ENCODE measurements at regions of chr6 and their contacts with region 1.

Region 1: DNA sequence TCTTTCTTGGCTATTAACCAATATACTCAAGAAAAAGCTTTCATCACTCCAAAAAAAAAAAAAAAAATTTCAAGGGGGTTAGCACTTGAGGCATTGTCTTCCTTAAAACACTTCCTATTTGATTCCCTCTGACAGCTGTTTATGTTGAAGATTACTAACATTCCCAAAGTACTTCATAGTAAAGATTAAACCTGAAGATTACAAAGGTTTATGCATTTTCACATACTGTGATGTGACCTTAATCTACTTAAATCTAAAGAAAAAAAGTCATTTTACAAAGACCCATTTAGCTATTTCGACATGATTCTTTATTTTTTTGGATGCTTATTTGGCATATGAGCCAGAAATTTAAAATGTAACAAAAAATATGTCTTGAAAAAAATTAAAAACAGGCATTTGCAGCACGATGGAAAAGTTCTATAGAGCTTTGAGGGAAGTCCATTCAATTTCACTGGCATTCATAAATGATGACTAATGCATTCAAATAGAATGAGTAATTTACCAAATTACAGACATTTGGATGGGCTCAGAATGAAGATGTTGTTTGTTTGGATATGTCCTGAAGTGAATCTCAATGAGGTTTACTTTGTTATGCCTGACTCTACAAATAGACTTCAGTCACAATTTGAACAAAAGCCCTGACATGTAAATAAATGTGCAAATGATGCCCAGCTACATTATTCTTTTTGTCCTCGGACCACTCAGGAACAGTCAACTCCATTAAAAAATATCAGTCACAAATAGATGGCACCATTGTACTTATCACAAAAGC is 674.6 kb upstream of the MARCKS start:
- DNase-seq: peak; percentile 72
- H3K4me3 ChIP-seq: no peak overlapping the region
- H3K27ac ChIP-seq: no peak overlapping the region
- H3K4me1 ChIP-seq: peaks cover 8% of the 10 kb centered on the region
- H3K27me3 ChIP-seq: no peaks in the 10 kb centered on the region
- CTCF ChIP-seq: 0 out of 2 replicates have a peak, but pooled peaks have one; percentile 14

Region 2: DNA sequence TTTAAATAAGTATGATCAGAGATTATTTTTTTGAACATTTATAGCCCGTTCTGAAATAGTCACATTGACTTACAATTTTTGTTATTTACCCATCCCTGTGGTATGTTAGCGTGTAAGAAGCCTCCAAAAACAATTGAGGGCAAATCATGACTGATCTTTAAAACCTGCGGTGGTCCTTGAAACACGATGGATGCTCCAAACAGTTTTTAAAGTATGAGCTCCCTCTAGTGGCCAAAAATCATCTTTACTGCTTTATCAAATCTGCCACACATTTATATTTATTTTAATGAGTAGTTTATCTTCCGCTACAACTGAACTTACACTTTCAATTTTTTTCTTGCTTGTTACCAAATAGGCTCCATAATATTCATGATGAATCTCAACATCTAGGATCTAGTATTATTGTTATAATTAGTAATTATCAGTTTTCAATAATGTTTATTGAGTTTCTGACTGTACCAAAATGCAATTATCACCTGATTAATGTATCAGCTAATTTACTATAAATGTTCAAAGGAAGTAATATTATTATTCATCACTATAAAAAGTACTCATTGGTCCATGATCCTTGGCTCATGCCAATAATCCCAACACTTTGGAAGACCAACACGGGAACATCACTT is 726.8 kb after region 1 on chr6:
- CTCF ChIA-PET with region 1: no interaction called
- POLR2A ChIA-PET with region 1: no interaction called
- intact Hi-C with region 1: loop called (anchors 10 kb)
- DNase-seq: peak; percentile 79
- H3K4me3 ChIP-seq: no peak overlapping the region
- H3K27ac ChIP-seq: no peak overlapping the region
- H3K4me1 ChIP-seq: no peaks in the 10 kb centered on the region
- H3K27me3 ChIP-seq: no peaks in the 10 kb centered on the region
- CTCF ChIP-seq: peak; percentile 73

Measured in A673 (cell line).